K562 (cell line): ENCODE measurements at regions of chr19 and their contacts with region 1.

Region 1: GRCh38 chr19:39871886-39872866 is 26.0 kb upstream of the FBL start:
- DNase-seq: no peak
- ATAC-seq: peak; percentile 63
- H3K4me3 ChIP-seq: no peak overlapping the region
- H3K27ac ChIP-seq: no peak overlapping the region
- H3K4me1 ChIP-seq: peaks cover 0 to 21% of the 10 kb centered on the region in 2 experiments; a peak in 2 of 5 replicates
- H3K27me3 ChIP-seq: peaks cover 15 to 57% of the 10 kb centered on the region in 2 experiments
- CTCF ChIP-seq: 0 out of 6 replicates have a peak, but pooled peaks of 1 of the 3 experiments have one; percentile 18
- EP300 ChIP-seq: no peak
- POLR2A ChIP-seq: no peak
- RAD21 ChIP-seq: no peak

Region 2: DNA sequence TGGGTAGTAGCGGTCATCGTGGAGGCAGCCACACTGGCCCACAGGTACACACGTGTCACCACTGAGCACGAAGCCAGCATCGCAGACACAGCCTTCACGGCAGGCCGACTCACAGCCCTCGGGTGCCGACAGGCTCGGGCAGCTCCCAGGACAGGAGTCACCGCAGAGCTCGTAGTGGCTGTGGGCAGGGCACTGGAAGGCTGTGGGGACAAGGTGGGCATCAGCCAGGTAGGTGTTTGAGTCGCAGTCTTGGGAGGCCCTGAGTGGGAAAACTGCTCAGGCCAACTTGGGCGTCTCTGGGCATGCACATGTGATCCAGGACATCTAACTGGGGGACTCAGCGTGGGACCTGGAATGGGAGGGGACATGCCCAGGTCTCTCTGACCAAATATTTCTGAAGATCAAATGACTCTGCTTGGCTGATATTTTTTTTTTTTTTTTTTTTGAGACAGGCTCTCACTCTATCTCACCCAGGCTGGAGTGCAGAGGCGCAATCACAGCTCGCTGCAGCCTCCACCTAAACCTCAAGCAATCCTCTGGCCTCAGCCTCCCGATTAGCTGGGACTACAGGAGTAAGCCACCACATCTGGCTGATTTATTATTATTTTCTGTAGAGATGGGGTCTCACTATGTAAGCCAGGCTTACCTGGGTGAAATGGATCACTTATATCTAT is 17.8 kb after region 1 on chr19:
- CTCF ChIA-PET with region 1: no interaction called
- POLR2A ChIA-PET with region 1: no interaction called
- in situ Hi-C with region 1: no loop called
- intact Hi-C with region 1: loop called (anchors 2 kb)
- DNase-seq: no peak
- ATAC-seq: no peak
- H3K4me3 ChIP-seq: no peak overlapping the region
- H3K27ac ChIP-seq: no peak overlapping the region
- H3K4me1 ChIP-seq: peaks cover 0 to 9% of the 10 kb centered on the region in 2 experiments; a peak in 2 of 5 replicates
- H3K27me3 ChIP-seq: peaks cover 22 to 38% of the 10 kb centered on the region in 2 experiments
- CTCF ChIP-seq: no peak
- EP300 ChIP-seq: no peak
- POLR2A ChIP-seq: no peak
- RAD21 ChIP-seq: no peak